Activated CD4-positive, alpha-beta T cell treated with anti-CD3 and anti-CD28 coated beads for 36 hours (primary cell): ENCODE measurements at regions of chr9 and their contacts with region 1.

Region 1: GRCh38 chr9:30900706-30901105 is 1483.7 kb upstream of the ACO1 start:
- DNase-seq: no peak
- ATAC-seq: no peak
- H3K4me3 Mint-ChIP-seq: no peak overlapping the region
- H3K27ac Mint-ChIP-seq: no peak overlapping the region
- H3K4me1 Mint-ChIP-seq: no peaks in the 10 kb centered on the region
- H3K27me3 Mint-ChIP-seq: no peaks in the 10 kb centered on the region

Region 2: DNA sequence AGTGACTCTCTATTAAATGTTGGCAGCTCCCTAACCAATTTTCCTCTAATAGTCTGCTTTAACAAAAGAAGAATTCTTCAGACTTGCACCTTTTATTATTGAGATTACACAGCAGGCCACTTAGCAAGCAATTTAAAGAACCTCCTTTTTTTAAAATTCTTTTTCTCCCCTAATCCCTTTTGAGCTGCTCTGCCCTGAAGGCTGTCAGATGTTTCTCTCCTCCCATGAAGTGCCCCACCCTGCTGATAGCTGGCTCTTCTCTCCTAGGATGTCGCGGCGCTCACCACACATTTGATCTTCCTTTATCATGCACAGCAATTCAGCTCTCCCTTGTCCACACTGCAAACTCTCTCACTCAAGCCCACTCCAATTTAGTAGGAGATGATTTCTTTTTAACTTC is 12.6 kb after region 1 on chr9:
- CTCF ChIA-PET with region 1: interaction called, 3 read pairs
- POLR2A ChIA-PET with region 1: no interaction called
- intact Hi-C with region 1: loop called in 1 of 2 experiments (anchors 1 kb)
- DNase-seq: no peak
- ATAC-seq: no peak
- H3K4me3 Mint-ChIP-seq: no peak overlapping the region
- H3K27ac Mint-ChIP-seq: no peak overlapping the region
- H3K4me1 Mint-ChIP-seq: no peaks in the 10 kb centered on the region
- H3K27me3 Mint-ChIP-seq: no peaks in the 10 kb centered on the region